ENCODE measurements at regions of chr6 and their contacts with region 1.

Region 1: DNA sequence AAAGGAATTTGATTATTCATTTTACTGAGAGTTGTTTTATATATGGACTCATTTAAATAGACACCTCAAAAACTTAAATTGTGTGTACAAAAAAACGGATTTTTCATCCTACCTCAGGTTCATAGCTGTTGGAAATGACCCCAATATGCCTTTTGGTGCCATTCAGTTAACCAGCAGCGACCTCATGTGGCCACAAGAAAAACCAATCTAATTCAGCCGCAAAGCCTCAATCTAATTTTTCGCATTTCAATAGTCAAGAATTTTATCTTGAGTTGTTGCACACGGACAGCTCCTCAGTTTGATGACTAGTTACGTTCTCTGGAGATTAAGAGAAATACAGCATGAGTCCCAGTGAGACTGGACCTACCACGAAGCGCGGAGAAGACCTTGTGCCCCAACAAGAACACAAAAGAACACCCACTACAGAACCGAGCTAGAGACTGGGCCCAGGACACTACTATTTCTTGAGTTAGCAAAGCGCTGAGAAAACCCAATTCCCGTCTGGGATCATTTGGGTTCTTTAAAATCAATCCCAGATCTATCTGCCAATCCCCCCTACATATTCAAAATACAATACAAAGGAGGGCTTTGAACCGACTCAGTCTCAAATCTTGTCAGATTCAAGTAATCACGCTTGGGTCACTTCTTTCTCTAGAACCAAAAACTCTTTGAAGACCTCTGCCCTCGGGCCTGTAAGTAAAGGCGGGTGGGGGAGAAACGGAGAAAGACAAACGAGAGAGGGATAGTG is 1.1 kb downstream of the TCP11 start:
- DNase-seq: peak in 2 of 3 donors; percentile 26 to 41
- ATAC-seq: peak; percentile 66
- H3K4me3 ChIP-seq: no peak overlapping the region
- H3K4me1 ChIP-seq: peaks cover 14% of the 10 kb centered on the region
- CTCF ChIP-seq: peak; percentile 54

Region 2: GRCh38 chr6:34768148-34768547 is 371.9 kb before region 1 on chr6:
- intact Hi-C with region 1: no loop called
- DNase-seq: no peak
- ATAC-seq: no peak
- H3K4me3 ChIP-seq: no peak overlapping the region
- H3K4me1 ChIP-seq: no peaks in the 10 kb centered on the region
- CTCF ChIP-seq: no peak

Region 3: DNA sequence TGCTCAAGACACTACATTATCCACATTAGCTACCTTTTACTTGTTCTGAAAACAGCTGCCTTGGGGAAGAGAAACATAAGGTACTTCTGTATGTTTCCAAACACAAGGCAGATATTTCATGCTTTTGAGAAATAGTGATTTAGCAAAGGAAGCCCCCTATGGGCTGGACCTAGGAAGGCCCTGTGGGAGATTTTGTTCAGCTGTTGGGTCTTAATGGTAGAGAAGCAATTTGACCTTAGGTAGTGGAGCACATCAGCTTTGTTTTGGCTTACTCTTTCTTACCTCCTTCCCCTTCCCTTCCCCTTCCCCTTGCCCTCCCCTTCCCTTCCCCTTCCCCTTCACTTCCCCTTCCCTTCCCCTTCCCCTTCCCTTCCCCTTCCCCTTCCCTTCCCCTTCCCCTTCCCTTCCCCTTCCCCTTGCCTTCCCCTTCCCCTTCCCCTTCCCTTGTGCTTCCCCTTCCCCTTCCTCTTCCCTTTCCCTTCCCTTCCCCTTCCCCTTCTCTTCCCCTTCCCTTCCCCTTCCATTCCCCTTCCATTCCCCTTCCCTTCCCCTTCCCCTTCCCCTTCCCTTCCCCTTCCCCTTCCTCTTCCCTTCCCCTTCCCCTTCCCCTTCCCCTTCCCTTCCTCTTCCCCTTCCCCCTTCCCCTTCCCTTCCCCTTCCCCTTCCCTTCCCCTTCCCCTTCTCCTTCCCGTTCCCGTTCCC is 166.4 kb before region 1 on chr6:
- intact Hi-C with region 1: no loop called
- DNase-seq: no peak
- ATAC-seq: no peak
- H3K4me3 ChIP-seq: no peak overlapping the region
- H3K4me1 ChIP-seq: no peaks in the 10 kb centered on the region
- CTCF ChIP-seq: no peak

Region 4: GRCh38 chr6:34986845-34987246 is 153.2 kb before region 1 on chr6:
- intact Hi-C with region 1: loop called (anchors 2 to 5 kb)
- DNase-seq: peak in 2 of 3 donors; percentile 57 to 65
- ATAC-seq: peak; percentile 91
- H3K4me3 ChIP-seq: no peak overlapping the region
- H3K4me1 ChIP-seq: no peaks in the 10 kb centered on the region
- CTCF ChIP-seq: peak; percentile 32

Region 5: DNA sequence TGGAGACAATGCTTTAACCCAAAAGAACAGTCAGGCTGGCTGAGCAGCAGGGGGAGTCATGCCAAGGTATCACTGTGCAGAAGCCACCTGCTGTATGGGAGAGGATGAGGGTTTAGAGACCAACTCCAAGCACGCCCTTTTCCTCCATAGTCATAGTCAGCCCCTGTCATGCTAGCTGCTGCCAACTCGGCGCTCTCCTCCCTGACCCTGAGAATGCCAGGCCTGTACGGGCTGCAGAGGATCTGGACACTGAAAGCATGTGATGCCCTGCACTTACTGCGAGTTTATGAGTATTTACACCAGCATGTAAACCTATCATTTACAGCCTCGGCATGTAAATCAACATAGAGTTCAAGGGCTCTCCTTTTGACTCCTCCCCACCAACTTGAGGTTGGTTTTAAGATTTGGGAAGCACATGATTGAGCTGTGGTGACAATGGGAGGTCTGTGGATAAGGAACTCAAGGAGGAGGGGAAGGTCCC is 62.0 kb after region 1 on chr6:
- intact Hi-C with region 1: loop called (anchors 10 kb)
- DNase-seq: peak in 2 of 3 donors; percentile 7 to 37
- ATAC-seq: peak; percentile 74
- H3K4me3 ChIP-seq: no peak overlapping the region
- H3K4me1 ChIP-seq: no peaks in the 10 kb centered on the region
- CTCF ChIP-seq: no peak

Region 6: DNA sequence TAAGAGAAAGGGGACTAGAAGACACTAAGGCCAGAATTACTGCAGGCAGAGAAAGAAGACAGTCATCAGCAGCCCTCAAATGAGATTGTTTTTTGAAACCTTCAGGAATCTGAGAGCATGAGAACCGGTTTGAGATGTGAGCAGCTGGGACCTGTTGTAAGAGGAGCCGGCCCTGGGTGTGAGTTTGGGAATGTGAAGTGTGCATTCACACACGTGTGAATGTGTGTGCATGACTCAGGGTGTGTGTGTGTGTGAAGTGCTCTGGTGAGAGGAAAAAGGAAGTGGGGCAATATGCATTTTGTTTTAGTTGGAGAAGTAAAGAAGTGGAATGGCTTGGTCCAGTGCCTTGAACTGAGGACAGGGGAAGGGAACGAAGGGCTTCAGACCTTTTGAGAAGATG is 77.9 kb after region 1 on chr6:
- intact Hi-C with region 1: no loop called
- DNase-seq: no peak
- ATAC-seq: no peak
- H3K4me3 ChIP-seq: no peak overlapping the region
- H3K4me1 ChIP-seq: peaks cover 8% of the 10 kb centered on the region
- CTCF ChIP-seq: no peak